Activated B cell treated with CpG ODN at 0.5 μM for 24 hours (primary cell): ENCODE measurements at regions of chr1 and their contacts with region 1.

Region 1: GRCh38 chr1:158177700-158178450 is 2.8 kb upstream of the CD1D start:
- DNase-seq: peak; percentile 70
- ATAC-seq: peak; percentile 77
- H3K4me3 Mint-ChIP-seq: peak overlapping the region; percentile 78
- H3K27ac Mint-ChIP-seq: peak overlapping the region; percentile 81
- H3K4me1 Mint-ChIP-seq: peaks cover 80% of the 10 kb centered on the region
- H3K27me3 Mint-ChIP-seq: no peaks in the 10 kb centered on the region
- CTCF ChIP-seq: no peak

Region 2: DNA sequence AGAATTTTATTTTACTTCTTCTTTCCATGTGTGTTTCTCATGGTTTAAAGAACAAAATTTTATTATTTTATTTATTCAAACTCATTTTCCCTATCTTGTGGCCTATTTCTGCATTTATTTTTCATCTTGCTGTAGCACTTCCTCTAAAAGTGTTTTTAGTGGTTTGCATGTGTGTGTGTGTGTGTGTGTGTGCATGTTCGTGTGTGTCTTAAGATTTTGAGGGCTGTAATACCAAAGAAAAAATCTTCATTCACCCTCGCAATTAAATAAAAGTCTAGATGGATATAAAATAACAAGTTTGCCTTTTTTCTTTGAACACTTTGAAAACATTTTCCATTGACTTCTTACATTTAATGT is 452.7 kb before region 1 on chr1:
- CTCF ChIA-PET with region 1: no interaction called
- POLR2A ChIA-PET with region 1: no interaction called
- intact Hi-C with region 1: loop called (anchors 2 kb)
- DNase-seq: no peak
- ATAC-seq: peak; percentile 17
- H3K4me3 Mint-ChIP-seq: peak overlapping the region; percentile 16
- H3K27ac Mint-ChIP-seq: peak overlapping the region; percentile 97
- H3K4me1 Mint-ChIP-seq: peaks cover 71% of the 10 kb centered on the region
- H3K27me3 Mint-ChIP-seq: no peaks in the 10 kb centered on the region
- CTCF ChIP-seq: no peak

Region 3: GRCh38 chr1:158149577-158150269 is 28.2 kb before region 1 on chr1:
- CTCF ChIA-PET with region 1: no interaction called
- POLR2A ChIA-PET with region 1: no interaction called
- intact Hi-C with region 1: loop called (anchors 1 kb)
- DNase-seq: peak; percentile 62
- ATAC-seq: peak; percentile 76
- H3K4me3 Mint-ChIP-seq: peak overlapping the region; percentile 94
- H3K27ac Mint-ChIP-seq: peak overlapping the region; percentile 95
- H3K4me1 Mint-ChIP-seq: peaks cover 60% of the 10 kb centered on the region
- H3K27me3 Mint-ChIP-seq: no peaks in the 10 kb centered on the region
- CTCF ChIP-seq: no peak

Region 4: GRCh38 chr1:158191299-158191698 is 13.4 kb after region 1 on chr1:
- CTCF ChIA-PET with region 1: no interaction called
- POLR2A ChIA-PET with region 1: no interaction called
- intact Hi-C with region 1: no loop called
- DNase-seq: no peak
- ATAC-seq: no peak
- H3K4me3 Mint-ChIP-seq: no peak overlapping the region
- H3K27ac Mint-ChIP-seq: no peak overlapping the region
- H3K4me1 Mint-ChIP-seq: peaks cover 5% of the 10 kb centered on the region
- H3K27me3 Mint-ChIP-seq: no peaks in the 10 kb centered on the region
- CTCF ChIP-seq: no peak

Region 5: DNA sequence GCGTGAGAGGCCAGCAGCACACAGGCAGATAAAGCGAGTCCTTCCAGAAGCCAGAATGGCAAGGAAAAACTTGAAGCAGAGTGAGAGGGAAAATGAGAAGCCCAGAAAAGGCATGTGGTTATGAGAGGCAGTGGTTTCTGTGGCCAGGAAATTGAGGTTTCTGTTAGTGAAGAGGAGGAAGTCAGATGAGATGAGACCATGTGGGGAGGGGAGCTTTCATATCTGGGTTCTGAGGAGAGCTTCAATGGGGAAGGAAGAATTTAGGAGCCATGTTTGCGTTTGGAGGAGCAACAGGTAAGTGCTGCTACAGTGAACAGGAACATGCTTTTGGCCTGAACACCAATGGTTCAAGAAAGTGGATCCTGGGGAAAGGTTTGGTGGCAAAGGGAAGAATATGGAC is 70.2 kb after region 1 on chr1:
- CTCF ChIA-PET with region 1: interaction called, 4 read pairs
- POLR2A ChIA-PET with region 1: interaction called, 4 read pairs
- intact Hi-C with region 1: loop called (anchors 2 kb)
- DNase-seq: peak; percentile 32
- ATAC-seq: peak; percentile 83
- H3K4me3 Mint-ChIP-seq: peak overlapping the region; percentile 26
- H3K27ac Mint-ChIP-seq: peak overlapping the region; percentile 59
- H3K4me1 Mint-ChIP-seq: peaks cover 51% of the 10 kb centered on the region
- H3K27me3 Mint-ChIP-seq: no peaks in the 10 kb centered on the region
- CTCF ChIP-seq: no peak

Region 6: DNA sequence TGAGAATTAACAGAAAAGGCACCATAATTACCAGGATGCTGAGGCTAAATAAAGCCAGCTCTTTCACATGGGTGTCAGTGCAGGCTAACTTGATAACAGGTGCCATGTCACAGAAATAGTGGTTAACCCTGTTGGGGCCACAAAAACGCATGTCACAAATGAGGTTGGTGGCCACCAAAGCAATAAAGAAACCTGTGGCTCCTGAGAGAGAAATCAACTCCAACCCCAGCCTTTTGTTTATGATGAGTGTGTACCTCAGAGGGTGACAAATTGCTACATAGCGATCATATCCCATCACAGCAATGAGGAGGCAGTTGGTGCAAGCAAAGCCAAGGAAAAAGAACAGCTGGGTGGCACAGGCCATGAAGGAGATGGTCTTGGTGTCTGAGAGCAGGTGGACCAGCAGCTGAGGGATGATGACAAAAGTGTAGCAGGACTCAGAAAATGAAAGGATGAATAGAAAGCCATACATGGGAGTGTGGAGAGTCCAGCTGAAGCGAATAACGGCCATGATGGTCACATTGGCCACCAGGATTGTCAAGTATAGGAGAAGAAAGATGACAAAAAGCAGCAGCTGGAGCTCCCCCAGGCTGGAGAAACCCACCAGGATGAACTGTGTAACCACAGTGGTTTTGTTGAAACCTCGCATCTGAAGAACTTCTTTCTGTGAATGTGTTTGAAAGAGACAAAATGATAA is 221.1 kb after region 1 on chr1 and contains the start of gene OR10T2:
- CTCF ChIA-PET with region 1: no interaction called
- POLR2A ChIA-PET with region 1: no interaction called
- intact Hi-C with region 1: loop called (anchors 5 kb)
- DNase-seq: no peak
- ATAC-seq: no peak
- H3K4me3 Mint-ChIP-seq: no peak within 1 kb of the TSS
- H3K27ac Mint-ChIP-seq: no peak within 1 kb of the TSS
- H3K4me1 Mint-ChIP-seq: peaks cover 12% of the 10 kb centered on the region
- H3K27me3 Mint-ChIP-seq: no peaks in the 10 kb centered on the region
- CTCF ChIP-seq: no peak
- total RNA-seq, gene OR10T2: not detected in 2 replicates